Prostate gland (tissue), 2 donors: ENCODE measurements at regions of chr14 and their contacts with region 1.

Region 1: DNA sequence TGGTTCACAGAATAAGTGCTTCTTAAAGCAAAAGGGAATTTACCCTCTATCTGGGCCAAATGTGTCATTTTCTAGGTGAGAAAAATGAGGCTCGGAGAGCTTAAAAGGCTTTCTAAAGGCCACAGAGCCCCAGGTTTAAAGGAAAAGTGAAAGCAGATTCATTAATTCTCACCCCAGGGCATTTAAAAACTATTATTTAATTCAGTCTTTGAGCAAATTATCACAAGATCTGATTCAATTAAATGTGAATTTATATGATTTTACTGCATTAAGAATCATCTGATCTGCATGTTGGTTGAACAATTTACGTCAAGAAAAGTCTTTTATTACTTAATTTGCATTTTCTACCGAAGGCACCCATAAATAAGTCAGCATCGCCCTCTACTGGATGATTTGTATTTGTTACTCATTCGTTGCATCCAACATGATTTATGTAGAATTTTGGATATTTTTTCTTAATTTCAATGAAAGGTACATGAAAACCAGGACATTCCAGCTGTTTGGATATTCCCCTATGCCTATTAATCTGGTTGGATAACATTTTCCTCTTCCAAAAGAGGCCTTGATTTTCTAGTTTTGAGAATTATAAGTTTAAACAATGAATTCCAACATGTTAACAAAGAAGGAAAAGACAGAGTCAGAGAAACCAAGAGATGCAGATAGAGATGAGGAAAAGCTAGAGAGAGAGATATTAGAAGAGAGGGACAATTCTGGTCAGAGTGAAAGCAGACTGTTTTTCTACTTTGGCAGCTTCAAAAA is 19.1 kb upstream of the DHRS7 start:
- DNase-seq: no peak
- H3K4me3 ChIP-seq: peak overlapping the region; percentile 10 to 22
- H3K27ac ChIP-seq: peak overlapping the region; percentile 29 to 58
- H3K4me1 ChIP-seq: no peaks in the 10 kb centered on the region
- H3K27me3 ChIP-seq: no peaks in the 10 kb centered on the region
- CTCF ChIP-seq: peak; percentile 60 to 93 (median 84)
- POLR2A ChIP-seq: no peak

Region 2: DNA sequence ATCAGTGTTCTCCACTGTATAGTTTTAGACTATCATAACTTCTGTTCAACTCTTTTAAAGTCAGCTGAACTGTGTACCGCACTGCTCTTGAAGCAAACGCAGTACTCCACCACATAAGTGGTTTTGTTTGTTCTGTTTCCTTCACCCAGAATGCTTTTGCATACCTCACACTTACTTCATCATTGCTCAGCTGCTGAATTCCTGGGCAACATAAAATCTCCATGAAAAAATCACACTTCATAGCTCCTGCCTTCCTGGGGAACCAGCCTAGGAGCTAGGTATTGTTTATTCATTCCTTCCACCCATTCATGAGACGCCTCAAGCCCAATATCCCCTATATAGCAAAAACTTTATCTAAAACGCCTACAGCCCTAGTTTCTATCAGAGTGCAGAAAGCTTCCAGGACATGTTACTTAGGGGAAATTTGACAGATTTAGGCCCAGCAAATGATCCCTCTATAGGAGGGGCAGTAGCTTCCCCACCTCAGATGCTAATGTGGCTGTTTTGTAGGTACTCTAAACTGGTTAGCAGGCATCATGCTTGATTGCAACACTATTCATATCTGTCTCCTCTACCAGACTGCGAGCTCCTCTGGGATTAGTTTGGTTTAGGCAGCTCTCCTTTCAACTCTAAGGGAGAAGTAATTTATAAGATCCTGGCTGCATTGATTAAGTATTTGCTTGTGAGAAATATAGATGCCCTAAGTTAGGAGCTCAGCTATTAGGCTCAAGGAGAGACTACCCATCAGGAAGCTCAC is 219.9 kb before region 1 on chr14:
- intact Hi-C with region 1: loop called (anchors 5 kb)
- DNase-seq: no peak
- H3K4me3 ChIP-seq: no peak overlapping the region
- H3K27ac ChIP-seq: peak overlapping the region in 1 of 2 donors; percentile 56
- H3K4me1 ChIP-seq: peaks cover 6% of the 10 kb centered on the region
- H3K27me3 ChIP-seq: no peaks in the 10 kb centered on the region
- CTCF ChIP-seq: no peak
- POLR2A ChIP-seq: no peak

Region 3: DNA sequence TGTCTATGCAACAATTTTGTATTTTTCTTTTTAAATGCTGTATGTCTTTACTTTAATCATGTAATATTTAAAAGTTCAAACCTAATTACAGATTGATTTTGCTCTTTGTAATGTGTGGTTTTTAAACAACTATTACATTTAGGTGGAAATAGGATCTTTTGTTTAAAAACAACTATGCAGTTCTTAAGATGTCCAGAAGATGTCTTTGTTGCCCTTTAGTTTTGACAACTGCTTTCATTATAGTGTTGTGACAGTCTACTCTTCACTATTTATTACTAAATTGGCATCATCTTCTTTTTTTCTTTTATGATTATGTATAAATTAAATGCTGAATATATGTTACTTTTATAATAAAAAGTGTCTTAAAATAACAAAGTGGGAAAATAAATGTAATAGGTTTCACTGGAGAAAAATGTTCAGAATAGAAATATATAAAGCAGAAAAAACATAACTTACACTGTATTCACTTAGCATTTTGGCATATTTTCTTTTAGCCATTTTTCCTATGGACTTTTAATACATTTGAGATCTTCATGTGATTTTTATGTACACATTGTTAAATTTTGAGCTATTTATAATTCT is 119.7 kb before region 1 on chr14:
- intact Hi-C with region 1: loop called (anchors 1 kb)
- DNase-seq: no peak
- H3K4me3 ChIP-seq: no peak overlapping the region
- H3K27ac ChIP-seq: no peak overlapping the region
- H3K4me1 ChIP-seq: no peaks in the 10 kb centered on the region
- H3K27me3 ChIP-seq: no peaks in the 10 kb centered on the region
- CTCF ChIP-seq: peak in 3 of 4 experiments; percentile 34 to 70 (median 60)
- POLR2A ChIP-seq: no peak

Region 4: GRCh38 chr14:60485598-60486251 is 301.4 kb after region 1 on chr14 and contains the start of gene C14orf39:
- intact Hi-C with region 1: no loop called
- DNase-seq: no peak
- H3K4me3 ChIP-seq: peak within 1 kb of the TSS; percentile 40 to 41
- H3K27ac ChIP-seq: no peak within 1 kb of the TSS
- H3K4me1 ChIP-seq: no peaks in the 10 kb centered on the region
- H3K27me3 ChIP-seq: no peaks in the 10 kb centered on the region
- CTCF ChIP-seq: no peak
- POLR2A ChIP-seq: no peak
- total RNA-seq, gene C14orf39: 0.41 to 4.7 TPM

Region 5: GRCh38 chr14:60561845-60562746 is 377.8 kb after region 1 on chr14:
- intact Hi-C with region 1: loop called (anchors 5 kb)
- DNase-seq: peak; percentile 14
- H3K4me3 ChIP-seq: no peak overlapping the region
- H3K27ac ChIP-seq: no peak overlapping the region
- H3K4me1 ChIP-seq: no peaks in the 10 kb centered on the region
- H3K27me3 ChIP-seq: no peaks in the 10 kb centered on the region
- CTCF ChIP-seq: peak in 3 of 4 experiments; percentile 29 to 53 (median 45)
- POLR2A ChIP-seq: no peak